ENCODE measurements at regions of chr1 and their contacts with region 1.

Region 1: GRCh38 chr1:214957330-214958137 is 125.0 kb upstream of the KCNK2 start:
- DNase-seq: peak; percentile 99
- H3K4me3 ChIP-seq: peak overlapping the region; percentile 9; the same call in 1 of the 2 replicates
- CTCF ChIP-seq: no peak

Region 2: GRCh38 chr1:214990619-214991018 is 33.1 kb after region 1 on chr1:
- CTCF ChIA-PET with region 1: no interaction called
- POLR2A ChIA-PET with region 1: interaction called, 15 read pairs
- DNase-seq: peak; percentile 97
- H3K4me3 ChIP-seq: no peak overlapping the region
- CTCF ChIP-seq: no peak

Measured in AG04449 (cell line).